ENCODE measurements at regions of chr13 and their contacts with region 1.

Region 1: DNA sequence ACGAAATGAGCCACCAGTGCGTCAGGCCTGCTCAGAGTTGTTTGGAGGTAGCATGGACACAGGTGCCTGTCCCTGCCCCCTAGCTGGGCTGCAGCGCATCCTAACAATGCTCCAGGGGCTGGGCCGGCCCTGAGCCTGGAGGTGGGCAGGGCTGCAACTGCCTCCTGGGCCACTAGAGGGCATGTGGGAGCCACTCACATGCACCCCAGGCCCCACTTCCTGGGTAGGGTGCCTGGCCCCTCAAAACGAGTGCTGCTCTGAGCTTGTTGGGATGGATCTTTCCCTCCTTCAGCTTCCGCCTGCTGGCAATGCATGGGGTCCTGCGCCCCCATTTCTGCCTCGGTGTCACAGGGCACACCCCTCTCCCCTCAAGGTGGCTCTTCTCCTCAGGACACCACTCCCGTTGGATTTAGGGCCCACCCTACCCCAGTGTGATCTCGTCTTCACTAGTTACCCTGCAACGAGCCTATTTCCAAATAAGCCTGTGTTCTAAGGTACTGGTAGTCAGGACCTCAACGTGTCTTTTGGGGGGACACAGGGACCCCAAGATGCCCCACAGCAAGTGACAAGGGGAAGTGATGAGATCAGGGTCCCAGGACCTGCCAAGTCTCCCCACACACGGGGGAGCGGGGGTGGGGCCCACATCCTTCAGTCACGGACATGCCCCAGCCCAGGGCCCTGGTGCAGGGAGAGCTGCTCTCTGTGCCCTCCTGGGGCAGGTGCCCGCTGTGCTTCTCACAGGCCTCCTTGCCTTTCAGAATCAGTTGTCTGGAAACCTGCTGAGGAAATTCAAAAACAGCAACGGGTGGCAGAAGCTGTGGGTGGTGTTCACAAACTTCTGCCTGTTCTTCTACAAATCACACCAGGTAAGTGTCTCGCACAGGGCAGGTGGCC is 131.3 kb downstream of the STK24 start:
- DNase-seq: no peak
- ATAC-seq: peak; percentile 84

Region 2: GRCh38 chr13:98653463-98653985 is 207.9 kb after region 1 on chr13:
- intact Hi-C with region 1: loop called (anchors 1 kb)
- DNase-seq: no peak
- ATAC-seq: peak; percentile 86

Region 3: DNA sequence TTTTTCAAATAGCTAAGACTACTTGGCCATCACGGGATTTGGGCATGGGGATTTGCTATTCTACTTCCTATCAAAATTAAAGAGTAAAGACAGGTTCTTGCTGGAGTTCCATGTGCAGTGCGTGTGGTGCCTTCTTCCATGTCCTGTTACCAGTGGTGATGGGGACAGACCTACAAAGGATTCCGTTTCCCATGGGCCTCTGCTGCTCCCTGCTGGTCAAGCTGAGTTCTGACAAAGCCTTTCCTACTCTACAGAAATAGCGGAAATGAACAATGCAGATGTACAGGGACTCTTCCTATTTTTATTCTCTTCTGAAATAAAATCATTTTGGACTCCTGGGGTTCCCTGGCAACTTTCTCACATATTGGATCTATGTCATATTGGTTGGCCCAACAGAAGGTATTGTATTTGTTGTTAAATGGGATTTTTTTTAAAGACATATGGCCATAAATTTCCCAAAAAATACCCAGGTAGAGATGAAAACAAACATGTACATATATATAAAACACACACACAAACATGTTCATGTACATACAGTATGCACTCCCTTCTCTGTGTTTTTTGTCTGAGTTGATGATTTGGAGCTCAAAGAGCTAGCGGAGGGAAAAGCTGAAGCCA is 397.4 kb after region 1 on chr13:
- intact Hi-C with region 1: loop called (anchors 5 kb)
- DNase-seq: peak; percentile 76
- ATAC-seq: peak; percentile 80

Measured in Right ventricle myocardium inferior (tissue), 1 donor.